ENCODE measurements at regions of chrX and their contacts with region 1.

Region 1: DNA sequence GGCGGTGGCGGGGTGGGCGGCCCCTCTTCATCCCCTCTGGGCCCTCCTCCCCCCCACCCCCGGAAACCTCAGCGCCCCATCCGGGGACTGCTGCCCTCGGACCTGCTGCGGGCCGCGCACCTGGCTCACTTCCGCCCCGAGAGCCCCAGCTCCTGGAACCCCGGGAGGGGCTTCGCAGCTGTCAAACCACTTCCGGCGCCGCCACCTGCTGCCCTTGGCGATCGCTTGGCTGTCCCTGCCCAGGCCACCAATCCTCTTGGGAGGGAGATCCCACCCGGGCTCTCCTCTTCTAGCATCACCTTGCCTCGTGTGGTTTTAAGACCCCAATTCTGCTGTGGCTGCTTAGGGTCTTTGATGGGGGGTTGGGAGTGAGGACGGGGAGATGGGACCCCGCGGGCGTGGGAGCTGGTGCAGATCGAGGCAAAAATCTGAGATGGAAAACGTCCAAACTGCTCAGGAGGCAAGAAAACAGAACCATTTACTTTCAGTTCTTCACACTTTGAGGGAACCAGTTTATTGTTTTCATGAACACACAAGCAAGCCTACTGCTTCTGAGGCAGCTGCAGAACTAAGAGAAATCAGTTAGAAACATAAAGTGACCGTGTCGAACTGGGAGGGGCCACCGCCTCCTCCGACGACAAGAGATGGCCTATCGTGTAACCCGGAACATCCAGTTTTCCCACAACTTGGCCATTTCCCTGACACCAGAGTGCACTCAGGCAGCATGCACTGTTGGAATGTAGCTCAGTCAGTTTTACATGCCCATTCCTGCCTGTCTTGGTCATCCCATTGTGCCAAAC is 779 bp downstream of the MTMR1 start:
- DNase-seq: peak; percentile 93
- H3K4me3 ChIP-seq: peak overlapping the region; percentile 75
- H3K27ac ChIP-seq: peak overlapping the region; percentile 99
- H3K4me1 ChIP-seq: peaks cover 70% of the 10 kb centered on the region
- CTCF ChIP-seq: no peak

Region 2: DNA sequence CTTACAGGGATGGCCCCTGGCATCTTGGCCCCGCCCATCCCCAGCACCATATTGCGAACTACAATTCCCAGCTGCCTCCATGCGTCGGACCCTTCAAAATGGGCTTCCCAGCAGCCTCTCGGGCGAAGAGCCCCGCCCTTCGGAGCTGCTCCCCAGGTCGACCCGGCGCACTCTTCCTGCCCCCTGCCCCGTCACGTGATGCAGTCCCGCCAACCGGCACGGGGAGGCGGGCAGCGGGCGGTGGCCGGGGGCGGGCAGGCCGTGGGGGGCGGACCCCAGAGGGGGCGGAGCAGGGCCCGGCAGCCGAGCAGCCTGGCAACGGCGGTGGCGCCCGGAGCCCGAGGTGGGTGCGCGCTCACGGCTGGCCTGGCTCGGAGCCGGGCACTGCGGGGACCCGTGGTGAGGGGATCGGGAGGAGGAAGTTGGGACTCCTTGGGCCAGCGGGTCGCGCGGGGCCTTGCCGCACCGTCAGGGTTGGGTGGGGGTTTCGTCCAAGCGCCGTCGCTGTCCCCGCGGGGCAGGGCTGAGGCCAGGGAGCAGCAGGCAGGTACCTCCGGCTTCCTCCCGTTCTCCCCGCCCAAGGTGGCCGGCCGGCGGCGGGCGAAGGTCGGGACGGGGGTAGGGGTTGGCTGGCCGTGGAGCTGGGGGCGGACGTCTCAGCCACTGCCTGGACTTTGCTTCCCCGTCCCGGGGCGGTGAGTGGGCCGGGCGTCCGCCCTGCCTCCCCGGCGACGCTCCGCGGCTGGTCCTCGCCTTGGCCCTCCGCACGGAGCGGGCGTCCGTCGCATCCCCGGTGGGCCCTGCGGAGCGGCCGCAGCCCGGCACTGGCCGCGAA is 125.4 kb before region 1 on chrX and contains the start of gene MTM1:
- CTCF ChIA-PET with region 1: no interaction called
- POLR2A ChIA-PET with region 1: no interaction called
- intact Hi-C with region 1: loop called (anchors 2 kb)
- DNase-seq: peak; percentile 95
- H3K4me3 ChIP-seq: peak within 1 kb of the TSS; percentile 84
- H3K27ac ChIP-seq: peak within 1 kb of the TSS; percentile 47
- H3K4me1 ChIP-seq: peaks cover 46% of the 10 kb centered on the region
- CTCF ChIP-seq: no peak
- total RNA-seq, gene MTM1: 4.0 and 6.0 TPM in 2 replicates

Region 3: GRCh38 chrX:150704030-150704613 is 10.1 kb after region 1 on chrX:
- CTCF ChIA-PET with region 1: interaction called, 3 read pairs
- POLR2A ChIA-PET with region 1: interaction called, 11 read pairs
- intact Hi-C with region 1: no loop called
- DNase-seq: no peak
- H3K4me3 ChIP-seq: no peak overlapping the region
- H3K27ac ChIP-seq: no peak overlapping the region
- H3K4me1 ChIP-seq: peaks cover 26% of the 10 kb centered on the region
- CTCF ChIP-seq: no peak

Region 4: GRCh38 chrX:150715184-150715583 is 21.2 kb after region 1 on chrX:
- CTCF ChIA-PET with region 1: interaction called, 3 read pairs
- POLR2A ChIA-PET with region 1: interaction called, 11 read pairs
- intact Hi-C with region 1: no loop called
- DNase-seq: no peak
- H3K4me3 ChIP-seq: no peak overlapping the region
- H3K27ac ChIP-seq: no peak overlapping the region
- H3K4me1 ChIP-seq: peaks cover 60% of the 10 kb centered on the region
- CTCF ChIP-seq: no peak